T-cell (primary cell): ENCODE measurements at regions of chrX and their contacts with region 1.

Region 1: GRCh38 chrX:109485470-109486340 is 3.8 kb upstream of the GUCY2F start:
- DNase-seq: peak; percentile 5 to 78 (median 48)
- ATAC-seq: peak; percentile 53 to 73 (median 63)
- H3K4me3 ChIP-seq: no peak overlapping the region
- H3K4me3 Mint-ChIP-seq: no peak overlapping the region
- H3K27ac ChIP-seq: no peak overlapping the region
- H3K27ac Mint-ChIP-seq: no peak overlapping the region
- H3K4me1 ChIP-seq: no peaks in the 10 kb centered on the region
- H3K4me1 Mint-ChIP-seq: no peaks in the 10 kb centered on the region
- H3K27me3 ChIP-seq: no peaks in the 10 kb centered on the region
- H3K27me3 Mint-ChIP-seq: peaks cover 2 to 28% of the 10 kb centered on the region in 2 donors

Region 2: GRCh38 chrX:109374262-109374960 is 111.3 kb before region 1 on chrX:
- CTCF ChIA-PET with region 1: no interaction called
- POLR2A ChIA-PET with region 1: no interaction called
- DNase-seq: no peak
- ATAC-seq: no peak
- H3K4me3 ChIP-seq: no peak overlapping the region
- H3K4me3 Mint-ChIP-seq: no peak overlapping the region
- H3K27ac ChIP-seq: no peak overlapping the region
- H3K27ac Mint-ChIP-seq: no peak overlapping the region
- H3K4me1 ChIP-seq: no peaks in the 10 kb centered on the region
- H3K4me1 Mint-ChIP-seq: no peaks in the 10 kb centered on the region
- H3K27me3 ChIP-seq: no peaks in the 10 kb centered on the region
- H3K27me3 Mint-ChIP-seq: peaks cover 0 to 5% of the 10 kb centered on the region in 2 donors

Region 3: GRCh38 chrX:109533631-109534030 is 47.9 kb after region 1 on chrX:
- CTCF ChIA-PET with region 1: no interaction called
- POLR2A ChIA-PET with region 1: no interaction called
- DNase-seq: no peak
- ATAC-seq: no peak
- H3K4me3 ChIP-seq: no peak overlapping the region
- H3K4me3 Mint-ChIP-seq: no peak overlapping the region
- H3K27ac ChIP-seq: no peak overlapping the region
- H3K27ac Mint-ChIP-seq: peak overlapping the region in 1 of 2 donors; percentile 36
- H3K4me1 ChIP-seq: peaks cover 2% of the 10 kb centered on the region in 2 experiments
- H3K4me1 Mint-ChIP-seq: peaks cover 6 to 25% (median 12%) of the 10 kb centered on the region in 3 donors
- H3K27me3 ChIP-seq: peaks cover 0 to 3% of the 10 kb centered on the region in 2 experiments
- H3K27me3 Mint-ChIP-seq: peaks cover 11 to 26% of the 10 kb centered on the region in 2 donors

Region 4: DNA sequence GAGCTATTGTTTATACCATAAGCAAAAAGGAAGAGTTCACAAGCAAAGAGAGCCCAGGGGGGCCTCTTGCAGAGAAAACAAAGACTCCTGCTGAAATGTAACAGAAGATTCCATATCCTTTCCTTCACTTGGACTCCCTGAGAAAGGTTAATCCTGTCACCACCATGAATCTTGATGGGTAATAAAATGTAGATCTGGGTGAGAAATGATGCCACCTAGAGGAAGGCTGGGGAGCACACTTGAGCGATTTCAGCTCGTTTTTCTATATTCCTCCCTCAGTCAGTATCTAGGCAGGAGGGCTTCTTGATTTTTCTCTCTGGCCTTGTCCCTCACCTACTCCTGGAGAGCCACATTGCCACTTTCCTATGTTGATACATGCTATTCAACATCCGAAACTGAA is 149.5 kb after region 1 on chrX:
- CTCF ChIA-PET with region 1: interaction called, 4 to 24 read pairs
- POLR2A ChIA-PET with region 1: no interaction called
- DNase-seq: peak in 1 of 35 experiments; percentile 19
- ATAC-seq: no peak
- H3K4me3 ChIP-seq: no peak overlapping the region
- H3K4me3 Mint-ChIP-seq: no peak overlapping the region
- H3K27ac ChIP-seq: no peak overlapping the region
- H3K27ac Mint-ChIP-seq: no peak overlapping the region
- H3K4me1 ChIP-seq: peaks cover 0 to 3% of the 10 kb centered on the region in 2 experiments
- H3K4me1 Mint-ChIP-seq: peaks cover 0 to 11% (median 9%) of the 10 kb centered on the region in 3 donors
- H3K27me3 ChIP-seq: no peaks in the 10 kb centered on the region
- H3K27me3 Mint-ChIP-seq: peaks cover 0 to 13% of the 10 kb centered on the region in 2 donors

Region 5: GRCh38 chrX:110477593-110478228 is 992.0 kb after region 1 on chrX:
- CTCF ChIA-PET with region 1: no interaction called
- POLR2A ChIA-PET with region 1: no interaction called
- DNase-seq: no peak
- ATAC-seq: no peak
- H3K4me3 ChIP-seq: no peak overlapping the region
- H3K4me3 Mint-ChIP-seq: no peak overlapping the region
- H3K27ac ChIP-seq: no peak overlapping the region
- H3K27ac Mint-ChIP-seq: no peak overlapping the region
- H3K4me1 ChIP-seq: no peaks in the 10 kb centered on the region
- H3K4me1 Mint-ChIP-seq: no peaks in the 10 kb centered on the region
- H3K27me3 ChIP-seq: no peaks in the 10 kb centered on the region
- H3K27me3 Mint-ChIP-seq: peaks cover 4 to 40% of the 10 kb centered on the region in 2 donors